Caco-2 (cell line): ENCODE measurements at regions of chr2 and their contacts with region 1.

Region 1: GRCh38 chr2:26605195-26605998 is 35.8 kb downstream of the CIB4 start:
- DNase-seq: peak; percentile 66 to 79
- H3K4me3 ChIP-seq: no peak overlapping the region
- H3K4me3 Mint-ChIP-seq: no peak overlapping the region
- H3K27ac Mint-ChIP-seq: peak overlapping the region; percentile 76
- H3K4me1 ChIP-seq: peaks cover 22% of the 10 kb centered on the region
- H3K4me1 Mint-ChIP-seq: peaks cover 32% of the 10 kb centered on the region
- H3K27me3 ChIP-seq: no peaks in the 10 kb centered on the region
- H3K27me3 Mint-ChIP-seq: peaks cover 3% of the 10 kb centered on the region
- CTCF ChIP-seq: peak; percentile 82 to 92

Region 2: DNA sequence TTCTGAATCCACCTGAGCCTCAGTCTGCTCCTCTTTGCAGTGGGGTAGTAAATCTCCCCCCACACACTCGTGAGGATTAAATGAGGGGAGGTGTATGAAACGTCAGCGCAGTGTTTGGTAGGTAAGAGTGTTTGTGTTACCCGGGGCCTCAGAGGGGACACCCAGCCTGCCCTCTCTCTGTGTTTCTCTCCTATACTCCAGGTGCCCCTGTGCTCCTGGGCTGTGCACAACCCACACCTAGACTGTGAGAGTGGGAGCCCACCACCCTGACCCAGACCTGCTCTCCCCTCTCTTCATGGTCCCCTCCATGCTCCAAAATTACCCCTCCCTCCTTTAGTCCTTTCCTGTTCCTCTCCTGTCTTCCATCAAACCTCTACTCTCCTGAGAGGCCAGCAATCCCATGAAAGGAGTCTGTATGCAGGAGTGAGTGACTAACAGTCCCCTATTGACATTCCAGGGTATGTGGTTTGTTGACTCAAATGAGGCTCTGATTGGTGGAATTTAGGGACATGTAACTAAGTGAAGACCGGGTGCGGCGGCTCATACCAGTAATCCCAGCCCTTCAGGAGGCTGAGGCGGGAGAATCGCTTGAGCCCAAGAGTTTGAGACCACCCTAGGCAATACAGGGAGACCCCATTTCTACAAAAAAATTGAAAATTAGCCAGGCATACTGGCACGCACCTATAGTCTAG is 25.4 kb after region 1 on chr2:
- CTCF ChIA-PET with region 1: no interaction called
- POLR2A ChIA-PET with region 1: no interaction called
- intact Hi-C with region 1: loop called (anchors 2 kb)
- DNase-seq: peak; percentile 77 to 79
- H3K4me3 ChIP-seq: no peak overlapping the region
- H3K4me3 Mint-ChIP-seq: peak overlapping the region; percentile 8
- H3K27ac Mint-ChIP-seq: peak overlapping the region; percentile 83
- H3K4me1 ChIP-seq: peaks cover 49% of the 10 kb centered on the region
- H3K4me1 Mint-ChIP-seq: peaks cover 23% of the 10 kb centered on the region
- H3K27me3 ChIP-seq: no peaks in the 10 kb centered on the region
- H3K27me3 Mint-ChIP-seq: no peaks in the 10 kb centered on the region
- CTCF ChIP-seq: no peak

Region 3: GRCh38 chr2:26640331-26640745 is 34.9 kb after region 1 on chr2:
- CTCF ChIA-PET with region 1: no interaction called
- POLR2A ChIA-PET with region 1: no interaction called
- intact Hi-C with region 1: loop called (anchors 5 kb)
- DNase-seq: peak; percentile 50 to 68
- H3K4me3 ChIP-seq: no peak overlapping the region
- H3K4me3 Mint-ChIP-seq: no peak overlapping the region
- H3K27ac Mint-ChIP-seq: no peak overlapping the region
- H3K4me1 ChIP-seq: no peaks in the 10 kb centered on the region
- H3K4me1 Mint-ChIP-seq: peaks cover 6% of the 10 kb centered on the region
- H3K27me3 ChIP-seq: no peaks in the 10 kb centered on the region
- H3K27me3 Mint-ChIP-seq: peaks cover 7% of the 10 kb centered on the region
- CTCF ChIP-seq: no peak

Region 4: GRCh38 chr2:26685989-26686839 is 80.8 kb after region 1 on chr2:
- CTCF ChIA-PET with region 1: no interaction called
- POLR2A ChIA-PET with region 1: no interaction called
- intact Hi-C with region 1: loop called (anchors 5 kb)
- DNase-seq: peak in 1 of 2 experiments; percentile 25
- H3K4me3 ChIP-seq: no peak overlapping the region
- H3K4me3 Mint-ChIP-seq: no peak overlapping the region
- H3K27ac Mint-ChIP-seq: no peak overlapping the region
- H3K4me1 ChIP-seq: peaks cover 22% of the 10 kb centered on the region
- H3K4me1 Mint-ChIP-seq: peaks cover 25% of the 10 kb centered on the region
- H3K27me3 ChIP-seq: no peaks in the 10 kb centered on the region
- H3K27me3 Mint-ChIP-seq: peaks cover 6% of the 10 kb centered on the region
- CTCF ChIP-seq: no peak

Region 5: GRCh38 chr2:26785431-26786206 is 180.2 kb after region 1 on chr2 and contains the start of gene CENPA:
- CTCF ChIA-PET with region 1: no interaction called
- POLR2A ChIA-PET with region 1: interaction called, 3 read pairs
- intact Hi-C with region 1: loop called (anchors 1 kb)
- DNase-seq: peak; percentile 98 to 99
- H3K4me3 ChIP-seq: peak within 1 kb of the TSS; percentile 75
- H3K4me3 Mint-ChIP-seq: peak within 1 kb of the TSS; percentile 85
- H3K27ac Mint-ChIP-seq: peak within 1 kb of the TSS; percentile 89
- H3K4me1 ChIP-seq: peaks cover 11% of the 10 kb centered on the region
- H3K4me1 Mint-ChIP-seq: peaks cover 18% of the 10 kb centered on the region
- H3K27me3 ChIP-seq: no peaks in the 10 kb centered on the region
- H3K27me3 Mint-ChIP-seq: no peaks in the 10 kb centered on the region
- CTCF ChIP-seq: peak; percentile 15 to 20
- total RNA-seq, gene CENPA: 38.4 and 39.9 TPM in 2 replicates